ENCODE measurements at regions of chr11 and their contacts with region 1.

Region 1: DNA sequence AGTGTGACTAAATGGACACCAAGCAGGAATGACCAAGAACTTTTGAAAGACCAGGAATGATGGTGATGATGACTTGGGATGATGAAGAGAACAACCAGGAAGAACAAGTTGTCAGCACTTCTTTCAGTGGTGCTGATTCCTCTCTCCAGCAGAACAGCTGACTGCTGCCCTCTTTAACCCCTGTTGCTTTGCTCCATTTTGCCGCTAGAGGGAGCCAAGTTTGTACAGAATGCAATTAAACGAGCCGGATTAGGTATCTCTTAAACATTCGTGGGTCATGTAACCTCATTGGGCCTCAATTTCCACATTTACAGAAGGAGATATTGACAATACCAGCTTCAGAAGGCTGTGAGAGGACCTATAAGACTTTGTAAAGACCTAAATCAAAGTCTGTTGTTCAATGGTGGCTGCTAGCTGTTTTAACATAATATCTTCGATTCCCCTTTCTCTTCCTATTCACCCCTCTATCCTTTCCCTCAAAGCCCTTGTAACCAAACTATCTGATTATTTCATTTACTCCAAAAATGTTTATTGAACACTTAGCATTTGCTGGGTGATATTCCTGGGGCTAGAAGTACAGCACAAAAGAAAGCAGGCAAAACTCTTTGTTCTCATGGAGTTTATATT is 1.9 kb downstream of the OR4S1 start:
- DNase-seq: peak in 4 of 5 donors; percentile 44 to 47 (median 44)
- ATAC-seq: peak in 3 of 4 donors; percentile 54 to 60 (median 60)
- H3K4me3 ChIP-seq: no peak overlapping the region
- H3K27ac ChIP-seq: no peak overlapping the region
- H3K4me1 ChIP-seq: no peaks in the 10 kb centered on the region
- H3K27me3 ChIP-seq: no peaks in the 10 kb centered on the region
- CTCF ChIP-seq: peak; percentile 55 to 84 (median 74)
- POLR2A ChIP-seq: no peak

Region 2: GRCh38 chr11:47879259-47880158 is 428.4 kb before region 1 on chr11:
- intact Hi-C with region 1: no loop called
- DNase-seq: no peak
- ATAC-seq: no peak
- H3K4me3 ChIP-seq: no peak overlapping the region
- H3K27ac ChIP-seq: peak overlapping the region in 1 of 12 donors; percentile 27
- H3K4me1 ChIP-seq: peaks cover 0 to 21% (median 0%) of the 10 kb centered on the region in 12 donors
- H3K27me3 ChIP-seq: no peaks in the 10 kb centered on the region
- CTCF ChIP-seq: no peak
- POLR2A ChIP-seq: no peak

Region 3: GRCh38 chr11:48161951-48162884 is 145.7 kb before region 1 on chr11:
- intact Hi-C with region 1: no loop called
- DNase-seq: no peak
- ATAC-seq: no peak
- H3K4me3 ChIP-seq: no peak overlapping the region
- H3K27ac ChIP-seq: no peak overlapping the region
- H3K4me1 ChIP-seq: peaks cover 0 to 2% (median 0%) of the 10 kb centered on the region in 12 donors
- H3K27me3 ChIP-seq: no peaks in the 10 kb centered on the region
- CTCF ChIP-seq: no peak
- POLR2A ChIP-seq: no peak

Region 4: DNA sequence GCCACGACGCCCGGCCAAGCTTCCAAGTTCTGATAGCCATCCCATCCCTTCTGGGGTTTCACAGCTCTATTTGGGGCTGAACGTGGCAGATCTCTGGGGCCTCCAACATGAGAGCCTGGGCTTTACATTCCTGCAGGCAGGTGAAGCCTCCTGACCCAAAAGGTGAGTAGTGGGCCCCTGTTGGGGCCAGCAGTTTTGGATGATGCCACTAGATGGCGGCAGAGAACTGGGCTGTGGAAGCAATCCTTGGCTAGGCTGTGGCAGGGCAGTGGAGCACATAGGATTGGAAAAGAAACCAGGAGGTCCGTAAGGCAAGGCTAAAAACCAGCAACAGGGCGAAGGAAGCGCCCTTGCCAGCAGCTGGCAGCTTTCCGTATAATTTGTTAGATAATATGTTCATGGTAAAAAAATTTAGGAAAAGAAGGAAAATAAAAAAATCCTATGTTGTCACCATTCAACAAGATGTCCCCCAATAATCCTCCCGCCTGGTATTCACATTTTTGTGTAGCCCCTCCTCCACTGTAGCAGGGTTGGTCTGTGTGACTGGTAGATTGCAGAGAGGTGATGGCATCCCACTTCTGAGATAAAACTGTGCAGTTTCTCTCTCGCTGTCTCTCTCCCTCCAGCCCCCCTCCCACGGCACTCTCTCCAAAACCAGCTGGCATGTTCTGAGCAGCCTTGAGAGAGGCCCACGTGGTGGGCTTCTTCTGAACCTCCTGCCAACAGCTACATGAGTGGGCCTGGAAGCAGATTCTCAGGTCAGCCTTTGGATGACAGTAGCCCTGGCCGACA is 134.9 kb before region 1 on chr11:
- intact Hi-C with region 1: loop called in 2 of 10 experiments (anchors 5 kb)
- DNase-seq: peak; percentile 59 to 82 (median 69)
- ATAC-seq: peak; percentile 48 to 73 (median 66)
- H3K4me3 ChIP-seq: peak overlapping the region in 3 of 12 donors; percentile 13 to 28 (median 26)
- H3K27ac ChIP-seq: peak overlapping the region in 11 of 12 donors; percentile 17 to 91 (median 71)
- H3K4me1 ChIP-seq: peaks cover 0 to 46% (median 29%) of the 10 kb centered on the region in 12 donors
- H3K27me3 ChIP-seq: no peaks in the 10 kb centered on the region
- CTCF ChIP-seq: peak; percentile 78 to 90 (median 84)
- POLR2A ChIP-seq: no peak

Region 5: DNA sequence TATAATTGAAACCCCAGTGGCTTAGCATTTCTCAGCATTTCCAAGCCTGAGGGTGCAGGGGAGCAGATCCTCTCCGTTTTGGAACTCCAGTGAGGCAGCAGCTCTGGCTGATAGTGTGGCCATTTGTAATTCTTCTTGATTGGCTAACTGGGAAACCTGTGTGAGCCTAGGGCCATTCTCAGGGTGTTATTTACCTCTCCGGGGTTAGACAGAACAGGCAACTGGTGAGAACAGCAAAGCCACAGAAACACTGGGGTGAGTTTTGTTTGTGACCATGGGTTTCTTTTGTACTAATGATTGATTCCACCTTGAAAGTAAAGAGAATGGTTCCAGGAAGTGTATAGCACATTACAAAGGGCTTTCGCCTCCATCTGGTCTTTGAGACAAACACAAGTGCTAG is 65.4 kb before region 1 on chr11:
- intact Hi-C with region 1: loop called in 1 of 10 experiments (anchors 10 kb)
- DNase-seq: no peak
- ATAC-seq: no peak
- H3K4me3 ChIP-seq: no peak overlapping the region
- H3K27ac ChIP-seq: no peak overlapping the region
- H3K4me1 ChIP-seq: no peaks in the 10 kb centered on the region
- H3K27me3 ChIP-seq: no peaks in the 10 kb centered on the region
- CTCF ChIP-seq: no peak
- POLR2A ChIP-seq: no peak